ENCODE measurements at regions of chr3 and their contacts with region 1.

Region 1: GRCh38 chr3:184727357-184728009 is 15.6 kb upstream of the MAGEF1 start:
- H3K4me3 Mint-ChIP-seq: no peak overlapping the region
- H3K27ac Mint-ChIP-seq: no peak overlapping the region
- H3K4me1 Mint-ChIP-seq: peaks cover 12% of the 10 kb centered on the region
- H3K27me3 Mint-ChIP-seq: peaks cover 7% of the 10 kb centered on the region

Region 2: DNA sequence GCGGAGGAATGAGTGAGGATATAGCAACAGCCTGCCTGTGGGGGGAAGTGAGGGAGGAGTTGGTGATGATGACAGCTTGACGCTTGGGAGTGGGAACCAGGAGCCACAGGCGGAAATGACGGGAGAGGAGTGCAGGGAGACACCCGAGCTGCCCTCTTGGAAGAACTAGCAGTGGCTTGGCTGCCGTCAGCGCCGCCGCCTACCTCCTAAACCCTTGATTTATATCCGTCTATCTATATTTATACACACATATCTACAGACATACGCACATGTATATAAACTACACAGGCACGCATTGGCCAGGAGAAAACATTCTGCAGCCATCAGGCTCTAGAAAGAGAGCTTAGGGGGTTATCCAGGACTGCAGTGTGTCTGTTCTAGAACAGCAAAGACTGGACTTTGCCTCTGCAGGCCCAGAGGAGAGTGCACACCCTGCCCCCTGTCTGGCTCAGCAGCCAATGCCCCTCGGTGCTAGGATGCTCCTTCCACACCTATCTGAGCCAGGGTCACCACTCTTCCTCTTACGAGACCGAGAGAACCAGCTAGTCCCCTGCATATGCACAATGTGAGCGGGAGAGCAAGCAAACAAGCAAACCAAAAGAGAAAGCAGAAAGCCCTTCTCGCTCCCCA is 29.7 kb after region 1 on chr3:
- intact Hi-C with region 1: no loop called
- H3K4me3 Mint-ChIP-seq: no peak overlapping the region
- H3K27ac Mint-ChIP-seq: peak overlapping the region; percentile 54
- H3K4me1 Mint-ChIP-seq: peaks cover 70% of the 10 kb centered on the region
- H3K27me3 Mint-ChIP-seq: peaks cover 10% of the 10 kb centered on the region

Region 3: GRCh38 chr3:184777336-184778004 is 50.0 kb after region 1 on chr3:
- intact Hi-C with region 1: loop called (anchors 5 kb)
- H3K4me3 Mint-ChIP-seq: no peak overlapping the region
- H3K27ac Mint-ChIP-seq: no peak overlapping the region
- H3K4me1 Mint-ChIP-seq: peaks cover 53% of the 10 kb centered on the region
- H3K27me3 Mint-ChIP-seq: peaks cover 26% of the 10 kb centered on the region